Natural killer cell (primary cell): ENCODE measurements at regions of chr1 and their contacts with region 1.

Region 1: GRCh38 chr1:116139592-116140134 is 28.5 kb downstream of the MAB21L3 start:
- DNase-seq: no peak
- ATAC-seq: no peak
- H3K4me3 ChIP-seq: no peak overlapping the region
- H3K4me3 Mint-ChIP-seq: no peak overlapping the region
- H3K27ac ChIP-seq: no peak overlapping the region
- H3K27ac Mint-ChIP-seq: no peak overlapping the region
- H3K4me1 ChIP-seq: peaks cover 8% of the 10 kb centered on the region
- H3K4me1 Mint-ChIP-seq: peaks cover 0 to 6% of the 10 kb centered on the region in 2 donors
- H3K27me3 ChIP-seq: peaks cover 6% of the 10 kb centered on the region
- H3K27me3 Mint-ChIP-seq: peaks cover 12 to 18% of the 10 kb centered on the region in 2 donors
- CTCF ChIP-seq: no peak

Region 2: DNA sequence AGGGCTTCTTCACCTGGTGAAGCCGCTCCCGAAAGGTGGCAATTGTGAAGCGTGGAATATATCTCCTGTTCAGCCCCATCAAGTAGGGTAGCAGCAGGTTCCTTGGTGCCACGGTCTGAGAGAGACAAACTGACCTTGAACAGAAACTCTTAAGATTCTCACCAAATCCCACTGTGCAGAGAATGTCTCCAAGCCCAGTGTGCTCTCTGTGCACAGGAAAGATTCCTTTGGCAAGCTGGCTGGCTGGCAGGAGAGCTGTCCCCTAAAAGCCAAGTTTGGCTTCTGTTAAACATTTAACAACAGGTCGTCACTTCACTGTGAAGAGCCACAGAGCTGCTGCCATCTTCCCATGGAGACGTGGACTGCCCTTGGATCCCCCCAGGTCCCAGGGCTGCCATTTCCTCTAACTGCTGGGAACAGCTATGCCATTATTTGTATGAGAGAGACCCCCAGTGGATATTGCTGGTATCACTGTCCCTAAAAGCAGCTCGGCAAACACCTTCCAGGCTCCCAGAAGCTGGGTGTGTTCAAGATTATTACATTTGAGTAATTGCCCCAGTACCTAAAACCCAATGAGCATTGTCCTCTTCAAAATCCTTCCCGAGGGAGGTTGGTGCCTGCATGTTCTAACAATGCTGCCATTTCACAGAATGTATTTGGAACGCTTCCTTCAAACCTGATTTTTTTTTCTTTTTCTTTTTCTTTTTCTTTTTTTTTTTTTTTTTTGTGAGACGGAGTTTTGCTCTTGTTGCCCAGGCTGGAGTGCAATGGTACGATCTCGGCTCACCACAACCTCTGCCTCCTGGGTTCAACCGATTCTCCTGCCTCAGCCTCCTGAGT is 359.3 kb after region 1 on chr1:
- intact Hi-C with region 1: loop called (anchors 1 kb)
- DNase-seq: peak; percentile 40 to 79
- ATAC-seq: peak; percentile 64 to 73 (median 70)
- H3K4me3 ChIP-seq: no peak overlapping the region
- H3K4me3 Mint-ChIP-seq: no peak overlapping the region
- H3K27ac ChIP-seq: no peak overlapping the region
- H3K27ac Mint-ChIP-seq: peak overlapping the region; percentile 23 to 73
- H3K4me1 ChIP-seq: peaks cover 39% of the 10 kb centered on the region
- H3K4me1 Mint-ChIP-seq: peaks cover 46 to 59% of the 10 kb centered on the region in 2 donors
- H3K27me3 ChIP-seq: no peaks in the 10 kb centered on the region
- H3K27me3 Mint-ChIP-seq: no peaks in the 10 kb centered on the region
- CTCF ChIP-seq: peak; percentile 79